ENCODE measurements at regions of chr7 and their contacts with region 1.

Region 1: DNA sequence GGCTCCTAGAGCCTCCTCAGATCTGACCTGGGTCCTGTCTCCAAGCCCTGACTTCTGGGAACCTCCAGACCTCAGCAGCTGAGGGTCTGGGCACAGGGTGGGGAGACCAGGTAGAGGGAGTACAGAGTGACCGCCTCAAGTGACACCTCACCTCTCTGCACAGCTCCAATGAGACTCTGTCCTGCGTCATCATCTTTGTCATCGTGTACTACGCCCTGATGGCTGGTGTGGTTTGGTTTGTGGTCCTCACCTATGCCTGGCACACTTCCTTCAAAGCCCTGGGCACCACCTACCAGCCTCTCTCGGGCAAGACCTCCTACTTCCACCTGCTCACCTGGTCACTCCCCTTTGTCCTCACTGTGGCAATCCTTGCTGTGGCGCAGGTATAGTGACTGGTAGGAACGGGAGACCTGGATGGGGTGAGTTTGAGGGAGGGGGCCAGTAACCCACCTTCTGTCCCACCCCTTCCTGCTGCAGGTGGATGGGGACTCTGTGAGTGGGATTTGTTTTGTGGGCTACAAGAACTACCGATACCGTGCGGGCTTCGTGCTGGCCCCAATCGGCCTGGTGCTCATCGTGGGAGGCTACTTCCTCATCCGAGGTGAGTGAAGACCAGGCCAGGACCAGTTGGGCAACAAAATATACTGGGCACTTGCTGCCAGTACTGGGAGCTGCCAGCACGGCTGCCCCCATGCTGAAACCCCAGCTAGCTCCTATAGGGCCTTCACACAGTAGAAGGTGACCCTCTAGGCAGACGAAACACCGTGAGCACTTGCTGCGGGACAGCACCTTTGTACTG is 17.8 kb downstream of the SMO start:
- DNase-seq: no peak
- H3K4me3 ChIP-seq: no peak overlapping the region
- H3K27ac ChIP-seq: no peak overlapping the region
- H3K4me1 ChIP-seq: peaks cover 0 to 6% (median 0%) of the 10 kb centered on the region in 4 donors
- H3K27me3 ChIP-seq: no peaks in the 10 kb centered on the region
- CTCF ChIP-seq: no peak
- EP300 ChIP-seq: no peak
- POLR2A ChIP-seq: no peak

Region 2: DNA sequence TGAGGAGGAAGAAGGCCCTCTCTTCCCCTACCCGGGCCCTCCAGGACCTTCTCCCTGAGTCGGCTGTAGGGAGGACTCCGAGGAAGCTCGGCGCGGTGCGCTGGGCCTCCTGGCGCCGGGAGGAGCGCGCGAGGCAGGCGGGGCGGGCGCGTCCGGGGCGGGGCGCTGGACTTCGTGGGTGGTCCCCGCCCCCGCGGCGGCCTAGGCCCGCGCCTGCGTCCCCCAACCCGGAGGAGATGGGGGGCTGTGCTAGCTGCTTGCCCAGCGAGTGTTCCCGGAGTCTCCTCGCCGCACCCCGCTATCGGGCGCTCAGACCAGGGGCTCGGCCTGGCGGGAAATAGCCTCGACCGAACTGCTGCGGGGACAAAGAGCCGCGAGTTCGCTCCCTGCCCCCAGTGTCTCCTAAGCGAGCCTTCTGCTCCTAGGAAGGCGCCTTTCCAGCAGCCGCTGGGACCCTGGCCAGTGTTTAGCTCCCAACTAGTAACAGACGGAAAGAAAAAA is 37.0 kb before region 1 on chr7:
- intact Hi-C with region 1: loop called (anchors 5 kb)
- DNase-seq: peak; percentile 54 to 85
- H3K4me3 ChIP-seq: peak overlapping the region; percentile 53 to 61 (median 58)
- H3K27ac ChIP-seq: peak overlapping the region in 4 of 5 donors; percentile 37 to 71 (median 61)
- H3K4me1 ChIP-seq: peaks cover 17 to 26% (median 21%) of the 10 kb centered on the region in 4 donors
- H3K27me3 ChIP-seq: peaks cover 0 to 4% (median 0%) of the 10 kb centered on the region in 3 donors
- CTCF ChIP-seq: no peak
- EP300 ChIP-seq: no peak
- POLR2A ChIP-seq: no peak